Posterior vena cava (tissue), 2 donors: ENCODE measurements at regions of chr2 and their contacts with region 1.

Region 1: DNA sequence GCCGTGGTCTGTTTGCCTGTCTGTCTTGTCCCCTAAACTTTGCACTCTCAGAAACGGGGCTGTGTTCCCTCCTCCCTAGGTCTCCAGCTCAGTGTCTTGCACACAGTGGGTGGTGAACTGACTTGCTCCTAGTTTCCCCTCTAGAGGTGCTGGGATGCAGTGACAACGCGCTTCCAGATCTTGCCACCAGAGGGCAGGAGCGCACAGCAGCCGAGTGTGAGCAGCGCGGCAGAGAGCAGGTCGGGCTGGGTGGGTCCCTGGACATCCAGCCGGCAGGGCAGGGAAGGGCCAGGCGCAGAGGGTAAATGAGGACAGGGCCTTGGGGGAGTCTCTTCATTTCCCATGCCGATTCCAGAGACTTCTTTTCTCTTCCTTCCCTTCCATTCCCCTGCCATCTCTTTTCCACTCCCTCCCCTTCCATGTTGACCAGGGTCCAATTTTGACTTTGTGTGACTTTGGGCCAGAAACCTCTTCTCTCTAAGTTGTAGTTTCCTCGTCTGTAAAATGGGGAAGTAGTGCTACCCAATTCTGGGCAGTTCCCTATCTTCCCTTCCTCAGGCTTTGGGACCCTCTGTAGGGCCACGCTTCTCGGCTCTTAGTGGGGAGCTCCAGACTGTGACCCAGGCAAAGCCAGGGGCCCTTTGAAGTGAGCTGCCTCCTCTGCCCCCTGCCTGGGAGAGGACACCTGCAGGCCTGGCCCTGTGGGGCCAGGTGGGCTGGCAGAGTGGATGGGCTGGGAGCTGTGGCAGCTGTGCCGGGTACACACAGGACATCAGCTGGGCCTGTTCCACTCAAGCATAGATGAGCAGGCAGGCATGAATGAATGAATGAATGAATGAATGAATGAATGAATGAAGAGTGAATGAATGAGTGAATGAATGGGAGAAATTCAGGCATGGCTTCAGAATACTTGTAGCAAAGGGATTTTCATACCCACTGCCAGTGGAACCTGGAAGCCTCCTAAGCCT is 43.3 kb upstream of the TAF1B start:
- DNase-seq: peak; percentile 96

Region 2: GRCh38 chr2:10054424-10054823 is 254.5 kb after region 1 on chr2:
- intact Hi-C with region 1: loop called in 1 of 2 experiments (anchors 5 kb)
- DNase-seq: peak; percentile 43